ENCODE measurements at regions of chr14 and their contacts with region 1.

Region 1: DNA sequence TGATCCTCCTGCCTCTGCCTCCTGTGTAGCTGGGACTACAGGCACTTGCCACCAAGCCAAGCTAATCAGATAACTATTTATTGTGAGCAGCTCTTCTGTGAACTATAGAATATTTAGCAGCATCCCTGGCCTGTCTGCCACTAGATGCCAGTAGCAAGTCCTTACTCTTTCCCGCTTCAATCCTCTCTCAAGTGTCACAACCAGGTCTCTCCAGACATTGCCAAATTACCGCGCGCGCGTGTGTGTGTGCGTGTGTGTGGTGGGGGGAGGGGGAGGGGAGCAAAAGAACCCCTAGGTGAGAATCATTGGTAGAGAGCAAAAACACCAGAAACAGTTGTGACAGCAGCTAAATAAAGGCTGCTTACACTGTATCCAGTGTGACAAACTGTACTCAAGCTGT is 49.9 kb downstream of the PPP2R5E start:
- DNase-seq: no peak
- H3K4me3 ChIP-seq: no peak overlapping the region
- H3K27ac ChIP-seq: peak overlapping the region in 2 of 4 donors; percentile 1 to 48
- H3K4me1 ChIP-seq: peaks cover 0 to 61% (median 49%) of the 10 kb centered on the region in 4 donors
- H3K27me3 ChIP-seq: no peaks in the 10 kb centered on the region
- CTCF ChIP-seq: no peak
- EP300 ChIP-seq: no peak
- POLR2A ChIP-seq: no peak

Region 2: DNA sequence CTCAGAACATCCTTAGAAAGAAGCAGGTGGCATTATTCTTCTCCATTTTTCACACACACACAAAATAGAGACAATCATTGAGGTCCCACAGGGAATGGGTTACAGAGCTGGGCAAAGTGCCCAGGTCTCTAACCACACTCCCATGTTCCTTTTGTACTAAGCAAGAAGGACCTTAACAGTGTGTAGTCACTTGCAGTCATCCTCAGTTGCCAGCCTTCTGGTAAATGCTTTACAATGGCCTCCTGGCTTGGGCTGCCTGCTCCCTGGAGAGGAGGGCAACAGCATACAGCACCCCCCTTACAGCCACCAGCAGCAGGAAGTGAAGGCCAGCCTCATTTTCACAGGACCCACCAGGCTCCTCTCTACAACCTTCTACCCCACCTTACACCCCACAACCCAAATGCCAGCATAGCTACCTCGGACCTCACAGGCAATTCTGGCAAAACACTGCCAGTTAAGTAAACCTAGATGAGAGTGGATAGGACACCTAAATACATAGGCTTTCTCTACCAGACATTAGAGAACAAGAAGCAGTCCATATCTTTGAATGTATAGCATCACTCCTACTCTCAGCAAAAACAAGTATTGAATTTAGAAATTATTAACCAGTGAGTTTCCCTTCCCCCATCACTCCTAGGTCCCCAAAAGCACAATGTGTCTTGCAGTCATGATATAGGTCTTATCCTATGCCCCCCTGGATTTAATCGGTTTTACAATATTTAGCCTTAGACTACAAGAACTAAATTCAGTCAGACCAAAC is 38.2 kb before region 1 on chr14:
- intact Hi-C with region 1: loop called (anchors 5 kb)
- DNase-seq: no peak
- H3K4me3 ChIP-seq: no peak overlapping the region
- H3K27ac ChIP-seq: no peak overlapping the region
- H3K4me1 ChIP-seq: peaks cover 0 to 55% (median 43%) of the 10 kb centered on the region in 4 donors
- H3K27me3 ChIP-seq: no peaks in the 10 kb centered on the region
- CTCF ChIP-seq: no peak
- EP300 ChIP-seq: no peak
- POLR2A ChIP-seq: no peak

Region 3: DNA sequence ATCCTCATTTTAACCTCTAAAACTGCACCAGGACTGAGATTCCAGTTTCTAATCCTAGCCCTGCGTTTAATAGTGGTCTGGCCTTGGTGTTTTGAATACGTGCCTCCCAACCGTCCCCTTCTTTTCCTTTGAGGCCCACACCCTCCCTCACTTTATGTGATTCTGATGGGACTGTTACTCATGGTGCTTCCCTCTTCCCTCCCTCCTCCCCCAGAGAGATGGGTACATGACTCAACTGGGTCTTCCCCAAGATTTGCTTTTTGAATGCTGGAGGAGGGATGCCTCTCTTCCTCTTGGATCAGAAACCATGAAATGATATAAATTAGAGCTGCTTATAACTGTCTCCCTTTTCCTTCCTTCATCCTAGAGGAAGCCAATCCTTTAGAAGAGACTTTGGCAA is 58.1 kb after region 1 on chr14:
- intact Hi-C with region 1: no loop called
- DNase-seq: no peak
- H3K4me3 ChIP-seq: no peak overlapping the region
- H3K27ac ChIP-seq: no peak overlapping the region
- H3K4me1 ChIP-seq: no peaks in the 10 kb centered on the region
- H3K27me3 ChIP-seq: no peaks in the 10 kb centered on the region
- CTCF ChIP-seq: no peak
- EP300 ChIP-seq: no peak
- POLR2A ChIP-seq: no peak

Region 4: GRCh38 chr14:63594455-63595372 is 101.5 kb after region 1 on chr14:
- intact Hi-C with region 1: no loop called
- DNase-seq: no peak
- H3K4me3 ChIP-seq: no peak overlapping the region
- H3K27ac ChIP-seq: no peak overlapping the region
- H3K4me1 ChIP-seq: no peaks in the 10 kb centered on the region
- H3K27me3 ChIP-seq: no peaks in the 10 kb centered on the region
- CTCF ChIP-seq: no peak
- EP300 ChIP-seq: no peak
- POLR2A ChIP-seq: no peak

Measured in sigmoid colon (tissue), 7 donors.